AG04449 (cell line): ENCODE measurements at regions of chr22 and their contacts with region 1.

Region 1: GRCh38 chr22:30089655-30089974 is 9.4 kb downstream of the HORMAD2 start:
- DNase-seq: no peak
- H3K4me3 ChIP-seq: no peak overlapping the region
- CTCF ChIP-seq: no peak

Region 2: DNA sequence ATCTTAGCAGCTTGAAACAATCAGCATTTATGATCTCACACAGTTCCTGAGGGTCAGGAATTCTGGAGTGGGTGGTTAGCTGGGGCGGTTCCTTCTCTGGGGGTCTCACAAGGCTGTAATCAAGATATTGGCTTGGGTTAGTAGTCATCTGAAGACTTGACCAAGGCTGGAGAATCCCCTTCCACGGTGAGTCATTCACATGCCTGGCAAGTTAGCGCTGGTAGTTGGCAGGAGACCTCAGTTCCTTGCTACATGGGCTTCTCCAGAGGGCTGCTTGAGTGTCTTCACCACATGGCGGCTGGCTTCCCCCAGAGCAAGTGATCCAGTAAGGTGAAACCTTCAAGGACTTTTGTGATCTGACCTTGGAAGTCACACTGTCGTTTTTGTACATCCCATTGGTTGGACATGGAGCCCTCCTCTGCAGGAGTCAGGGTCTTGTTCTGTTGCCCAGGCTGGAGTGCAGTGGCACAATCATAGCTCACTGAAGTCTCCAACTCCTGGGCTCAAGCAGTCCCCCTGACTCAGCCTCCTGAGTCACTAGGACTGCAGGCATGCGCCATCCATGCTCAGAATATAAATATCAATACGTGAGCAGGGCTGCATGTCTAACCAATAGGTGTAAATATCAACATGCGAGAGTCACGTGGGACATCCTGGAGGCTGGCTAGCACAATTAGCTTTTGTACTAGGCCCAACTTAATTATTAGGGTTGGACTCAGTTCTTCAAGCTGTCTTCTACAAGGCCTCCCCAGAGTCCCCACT is 501.5 kb before region 1 on chr22:
- CTCF ChIA-PET with region 1: interaction called, 25 read pairs
- POLR2A ChIA-PET with region 1: no interaction called
- DNase-seq: peak; percentile 63
- H3K4me3 ChIP-seq: no peak overlapping the region
- CTCF ChIP-seq: no peak

Region 3: DNA sequence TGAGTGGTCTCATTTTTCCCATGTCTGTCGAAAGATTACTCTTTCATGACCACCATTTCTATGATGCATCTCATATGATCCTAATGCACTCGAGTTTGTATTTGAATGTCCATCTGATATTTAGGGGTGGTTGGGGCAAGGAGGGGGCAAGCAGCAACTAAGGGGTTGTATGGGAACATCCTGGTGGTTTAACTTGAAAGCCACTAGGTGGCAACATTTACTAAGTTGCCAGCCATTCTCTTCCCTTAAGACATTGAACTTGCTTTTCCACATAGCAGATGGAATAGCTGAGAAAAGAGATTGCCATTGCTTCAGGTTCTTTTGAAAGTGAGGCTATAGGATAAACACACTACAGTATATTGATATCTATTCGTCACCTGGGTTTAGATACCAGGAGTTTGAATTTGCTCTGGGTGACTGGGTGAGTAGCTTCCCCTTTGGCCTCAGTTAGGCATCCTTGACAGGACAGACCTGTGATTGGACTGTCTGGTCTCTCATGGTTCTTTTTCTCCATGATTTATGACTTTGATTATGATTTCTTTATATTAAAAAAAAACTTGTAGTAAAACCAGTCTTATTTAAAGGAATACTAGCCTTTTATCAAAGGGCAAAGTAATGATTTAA is 453.8 kb before region 1 on chr22:
- CTCF ChIA-PET with region 1: interaction called, 58 read pairs
- POLR2A ChIA-PET with region 1: no interaction called
- DNase-seq: no peak
- H3K4me3 ChIP-seq: no peak overlapping the region
- CTCF ChIP-seq: peak; percentile 66

Region 4: DNA sequence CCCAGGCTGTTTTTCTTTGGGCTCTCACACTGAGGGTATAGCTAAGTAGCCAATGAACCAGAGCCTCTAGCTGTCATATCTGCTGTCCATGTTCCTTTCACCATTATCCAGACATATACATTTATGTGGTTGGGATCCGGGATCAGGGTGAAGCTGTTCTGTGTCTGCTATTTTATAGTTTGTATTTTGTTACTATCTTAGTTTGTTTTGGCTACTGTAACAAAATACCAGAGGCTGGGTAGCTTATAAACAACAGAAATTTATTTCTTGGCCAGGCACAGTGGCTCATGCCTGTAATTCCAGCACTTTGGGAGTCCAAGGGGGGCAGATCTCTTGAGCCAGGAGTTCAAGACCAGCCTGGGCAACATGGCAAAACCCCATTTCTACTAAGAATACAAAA is 410.3 kb before region 1 on chr22:
- CTCF ChIA-PET with region 1: interaction called, 12 read pairs
- POLR2A ChIA-PET with region 1: no interaction called
- DNase-seq: no peak
- H3K4me3 ChIP-seq: no peak overlapping the region
- CTCF ChIP-seq: no peak

Region 5: DNA sequence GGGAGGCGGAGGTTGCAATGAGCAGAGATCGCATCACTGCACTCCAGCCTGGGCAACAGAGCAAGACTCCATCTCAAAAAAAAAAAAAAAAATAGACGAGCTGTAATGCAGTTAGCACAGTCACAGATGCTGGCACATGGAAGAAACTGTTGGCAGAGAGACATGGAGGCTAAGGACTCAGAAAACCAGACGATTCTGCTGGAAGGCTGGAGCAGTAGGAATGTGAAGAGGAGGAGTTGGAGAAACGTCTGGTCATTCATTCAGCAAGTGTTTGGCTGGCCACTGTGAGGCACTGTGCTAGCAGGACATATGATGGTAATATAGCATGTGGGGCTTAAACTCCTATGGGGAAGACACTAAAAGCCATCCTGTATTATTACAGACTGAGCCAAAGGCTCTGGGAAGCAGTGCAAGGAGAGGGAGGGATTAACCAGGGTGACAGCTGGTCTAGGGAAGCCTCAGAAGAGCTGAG is 317.4 kb before region 1 on chr22:
- CTCF ChIA-PET with region 1: interaction called, 23 read pairs
- POLR2A ChIA-PET with region 1: no interaction called
- DNase-seq: peak; percentile 37
- H3K4me3 ChIP-seq: no peak overlapping the region
- CTCF ChIP-seq: peak; percentile 64

Region 6: DNA sequence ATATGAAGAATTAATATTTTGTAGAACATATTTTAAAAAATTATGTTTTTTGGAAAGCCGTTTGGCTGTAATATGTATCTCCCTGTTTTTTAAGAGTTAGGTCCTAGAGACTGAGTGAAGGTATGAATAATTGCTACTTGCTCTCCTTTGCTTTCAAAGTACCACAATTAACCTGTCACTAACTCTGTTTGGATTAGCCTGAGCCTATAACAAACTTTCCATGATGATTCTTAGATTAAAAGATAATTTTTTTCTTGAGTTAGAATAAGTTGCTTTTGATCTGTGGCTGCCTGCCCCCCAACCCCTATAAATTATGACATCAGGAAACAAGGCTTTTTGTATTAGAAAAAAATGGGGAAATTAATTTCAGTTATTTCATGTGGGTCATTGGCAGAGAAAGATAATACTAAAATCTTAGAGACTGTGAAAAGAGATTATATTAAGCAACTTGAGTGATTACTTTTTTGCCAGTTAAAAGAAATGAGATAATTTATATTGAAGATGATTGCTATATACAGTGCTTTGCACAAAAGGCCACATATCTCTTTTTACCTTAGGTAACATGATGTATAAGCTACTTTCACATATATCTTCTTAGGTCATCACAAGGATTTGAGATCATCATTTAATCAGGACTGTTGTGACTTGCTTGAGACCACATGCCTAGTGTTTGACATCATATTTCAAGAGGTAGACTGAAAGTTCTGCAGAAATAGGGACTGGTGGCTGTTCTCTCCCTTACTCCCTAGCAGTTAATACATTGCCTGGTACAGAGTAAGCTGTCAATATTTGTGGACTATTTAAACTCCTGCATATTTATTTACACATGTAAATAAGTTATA is 197.1 kb before region 1 on chr22:
- CTCF ChIA-PET with region 1: no interaction called
- POLR2A ChIA-PET with region 1: no interaction called
- DNase-seq: no peak
- H3K4me3 ChIP-seq: no peak overlapping the region
- CTCF ChIP-seq: no peak

Region 7: GRCh38 chr22:29964776-29965175 is 124.8 kb before region 1 on chr22:
- CTCF ChIA-PET with region 1: no interaction called
- POLR2A ChIA-PET with region 1: no interaction called
- DNase-seq: no peak
- H3K4me3 ChIP-seq: no peak overlapping the region
- CTCF ChIP-seq: no peak

Region 8: GRCh38 chr22:30104501-30105156 is 15.0 kb after region 1 on chr22:
- CTCF ChIA-PET with region 1: interaction called, 13 read pairs
- POLR2A ChIA-PET with region 1: no interaction called
- DNase-seq: no peak
- H3K4me3 ChIP-seq: no peak overlapping the region
- CTCF ChIP-seq: no peak

Region 9: GRCh38 chr22:30116362-30117117 is 26.9 kb after region 1 on chr22:
- CTCF ChIA-PET with region 1: no interaction called
- POLR2A ChIA-PET with region 1: no interaction called
- DNase-seq: peak; percentile 31
- H3K4me3 ChIP-seq: no peak overlapping the region
- CTCF ChIP-seq: no peak

Region 10: DNA sequence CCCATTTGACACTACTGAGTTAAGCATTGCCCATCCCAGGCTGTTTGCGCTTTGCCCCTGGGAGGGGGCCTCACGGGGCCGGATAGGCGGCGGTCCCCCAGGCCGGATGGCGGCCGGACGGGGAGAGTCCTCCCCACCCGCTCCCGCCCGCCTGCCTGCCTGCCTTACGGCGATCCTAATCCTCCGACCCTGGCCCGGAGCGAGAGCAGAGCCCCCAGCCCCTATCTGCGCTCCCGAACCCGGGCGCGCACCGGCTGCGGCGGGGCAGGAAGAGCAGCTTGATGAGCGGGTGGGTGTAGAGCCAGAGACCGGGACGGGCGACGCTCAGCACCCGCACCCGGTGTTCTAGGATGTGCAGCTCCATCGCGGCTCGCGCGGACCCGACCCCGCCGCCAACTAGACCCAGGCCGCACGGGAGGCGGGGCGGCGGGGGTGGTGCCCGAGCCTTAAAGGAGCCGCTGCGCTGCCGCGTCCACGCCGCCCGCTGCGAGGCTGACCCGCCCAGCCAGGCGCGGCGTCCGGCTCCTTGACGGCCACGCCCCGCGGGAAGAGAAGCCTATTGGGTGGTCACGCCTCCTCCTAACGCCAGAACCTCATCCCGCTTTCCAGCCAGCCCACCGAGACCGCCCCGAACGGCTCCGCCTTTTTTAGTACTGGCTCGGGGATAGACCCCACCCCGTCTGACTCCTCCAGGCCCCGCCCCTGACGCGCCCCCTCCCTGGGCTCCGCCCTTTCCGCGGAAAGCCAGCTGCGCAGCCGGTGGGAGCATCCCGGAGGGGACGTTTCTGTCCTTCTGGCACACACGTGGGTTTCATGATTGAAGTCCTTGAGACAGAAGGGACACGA is 199.7 kb after region 1 on chr22 and contains the start of gene CASTOR1:
- CTCF ChIA-PET with region 1: no interaction called
- POLR2A ChIA-PET with region 1: no interaction called
- DNase-seq: peak; percentile 83
- H3K4me3 ChIP-seq: peak within 1 kb of the TSS; percentile 81
- CTCF ChIP-seq: no peak